ENCODE measurements at regions of chr4 and their contacts with region 1.

Region 1: GRCh38 chr4:52659001-52659721 is at the start of gene USP46:
- DNase-seq: peak; percentile 34 to 67
- ATAC-seq: peak; percentile 83 to 88 (median 84)
- H3K4me3 ChIP-seq: peak within 1 kb of the TSS; percentile 74
- H3K4me3 Mint-ChIP-seq: peak within 1 kb of the TSS; percentile 92
- H3K27ac ChIP-seq: peak within 1 kb of the TSS; percentile 46
- H3K27ac Mint-ChIP-seq: peak within 1 kb of the TSS; percentile 38 to 76
- H3K4me1 ChIP-seq: peaks cover 14% of the 10 kb centered on the region
- H3K4me1 Mint-ChIP-seq: peaks cover 20 to 36% of the 10 kb centered on the region in 2 donors
- H3K27me3 ChIP-seq: no peaks in the 10 kb centered on the region
- H3K27me3 Mint-ChIP-seq: no peaks in the 10 kb centered on the region
- CTCF ChIP-seq: no peak
- total RNA-seq, gene USP46: 7.8 to 11.7 (median 10.3) TPM

Region 2: DNA sequence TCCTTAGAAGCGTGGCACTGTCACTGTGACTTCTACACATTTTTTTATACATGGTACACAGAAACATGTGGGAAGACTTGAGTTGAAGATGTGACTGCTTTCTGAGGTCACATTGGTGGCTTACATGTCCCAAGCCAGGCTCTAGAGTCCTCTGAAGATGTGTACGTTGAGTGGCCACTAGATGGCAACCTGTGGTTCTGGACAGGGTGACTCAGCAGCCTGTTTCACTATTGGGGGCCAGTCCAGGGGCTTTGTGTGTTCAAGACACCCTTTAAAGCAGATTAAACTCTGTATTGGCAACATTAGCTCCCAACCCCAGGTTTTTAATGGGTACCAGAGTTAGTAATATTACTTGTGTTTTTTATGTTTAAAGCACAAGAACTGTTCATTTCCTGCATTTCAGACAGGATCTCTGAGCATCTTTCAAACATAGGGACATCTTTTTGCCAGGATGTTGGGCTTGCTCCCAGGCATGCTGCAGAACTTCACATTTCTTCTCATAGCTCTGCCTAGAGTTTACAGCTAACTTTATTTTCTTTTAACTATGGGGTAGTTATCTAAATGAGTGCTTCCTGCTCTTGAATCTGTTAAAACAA is 763.2 kb before region 1 on chr4:
- intact Hi-C with region 1: loop called (anchors 10 kb)
- DNase-seq: peak in 1 of 2 donors; percentile 70
- ATAC-seq: peak; percentile 89 to 99 (median 95)
- H3K4me3 ChIP-seq: no peak overlapping the region
- H3K4me3 Mint-ChIP-seq: no peak overlapping the region
- H3K27ac ChIP-seq: no peak overlapping the region
- H3K27ac Mint-ChIP-seq: peak overlapping the region in 1 of 2 donors; percentile 21
- H3K4me1 ChIP-seq: no peaks in the 10 kb centered on the region
- H3K4me1 Mint-ChIP-seq: peaks cover 0 to 8% of the 10 kb centered on the region in 2 donors
- H3K27me3 ChIP-seq: no peaks in the 10 kb centered on the region
- H3K27me3 Mint-ChIP-seq: no peaks in the 10 kb centered on the region
- CTCF ChIP-seq: peak; percentile 84

Region 3: GRCh38 chr4:52376132-52376704 is 282.9 kb before region 1 on chr4:
- intact Hi-C with region 1: loop called (anchors 10 kb)
- DNase-seq: peak in 1 of 2 donors; percentile 53
- ATAC-seq: no peak
- H3K4me3 ChIP-seq: no peak overlapping the region
- H3K4me3 Mint-ChIP-seq: no peak overlapping the region
- H3K27ac ChIP-seq: no peak overlapping the region
- H3K27ac Mint-ChIP-seq: no peak overlapping the region
- H3K4me1 ChIP-seq: no peaks in the 10 kb centered on the region
- H3K4me1 Mint-ChIP-seq: no peaks in the 10 kb centered on the region
- H3K27me3 ChIP-seq: no peaks in the 10 kb centered on the region
- H3K27me3 Mint-ChIP-seq: no peaks in the 10 kb centered on the region
- CTCF ChIP-seq: peak; percentile 63

Region 4: DNA sequence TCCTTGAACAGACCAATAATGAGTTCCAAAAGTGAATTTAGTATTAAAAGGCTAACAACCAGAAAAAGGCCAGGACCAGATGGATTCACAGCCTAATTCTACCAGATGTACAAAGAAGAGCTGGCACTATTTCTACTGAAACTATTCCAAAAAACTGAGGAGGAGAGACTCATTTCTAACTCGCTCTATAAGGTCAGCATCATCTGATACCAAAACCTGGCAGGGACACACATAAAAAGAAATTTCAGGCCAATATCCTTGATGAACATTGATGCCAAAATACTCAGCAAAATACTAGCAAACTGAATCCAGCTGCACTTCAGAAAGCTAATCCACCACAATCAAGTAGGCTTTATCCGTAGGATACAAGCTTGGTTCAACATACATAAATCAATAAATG is 35.8 kb after region 1 on chr4:
- intact Hi-C with region 1: no loop called
- DNase-seq: no peak
- ATAC-seq: no peak
- H3K4me3 ChIP-seq: no peak overlapping the region
- H3K4me3 Mint-ChIP-seq: no peak overlapping the region
- H3K27ac ChIP-seq: no peak overlapping the region
- H3K27ac Mint-ChIP-seq: no peak overlapping the region
- H3K4me1 ChIP-seq: no peaks in the 10 kb centered on the region
- H3K4me1 Mint-ChIP-seq: peaks cover 0 to 6% of the 10 kb centered on the region in 2 donors
- H3K27me3 ChIP-seq: peaks cover 2% of the 10 kb centered on the region
- H3K27me3 Mint-ChIP-seq: peaks cover 8 to 51% of the 10 kb centered on the region in 2 donors
- CTCF ChIP-seq: no peak

Region 5: DNA sequence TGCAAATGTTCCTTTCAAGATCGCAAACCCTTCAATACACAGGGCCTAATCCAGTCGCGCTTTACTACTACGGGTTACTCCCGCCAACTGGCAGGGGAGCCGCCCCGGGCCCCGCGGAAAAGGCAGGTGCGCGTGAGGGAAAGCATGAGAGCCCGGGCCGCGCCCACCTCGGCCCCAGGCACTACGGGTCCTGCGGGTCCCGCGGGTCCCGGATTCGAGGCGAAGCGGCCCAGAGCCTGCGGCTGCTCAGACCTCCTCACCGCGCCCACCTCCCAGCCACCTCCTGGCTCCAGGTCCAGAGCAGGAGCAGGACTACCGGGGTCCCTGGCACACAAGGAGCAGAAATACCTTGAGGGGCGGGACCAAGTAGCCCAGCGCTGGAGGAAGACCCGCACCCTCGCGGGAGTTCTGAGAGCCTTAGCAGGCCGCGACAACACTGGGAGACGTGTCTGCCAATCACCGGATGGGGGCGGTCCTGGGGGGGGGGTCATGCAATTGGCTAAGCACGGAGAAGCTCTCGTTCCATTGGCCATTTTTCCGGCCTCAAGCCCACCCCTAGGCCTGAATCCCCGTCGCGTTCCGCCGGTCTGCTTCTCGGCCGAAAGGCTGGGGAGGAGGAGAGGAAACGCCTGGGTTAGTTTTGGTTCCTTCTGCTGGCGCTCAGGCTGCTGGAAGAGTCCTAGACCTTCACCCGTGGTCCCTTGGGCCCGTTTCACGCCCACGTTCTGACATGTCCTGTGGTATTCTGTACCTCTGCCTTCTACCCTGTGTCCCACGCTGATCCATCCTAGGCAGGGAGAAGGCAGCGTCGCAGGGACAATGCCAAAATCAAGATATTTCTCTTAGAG is 63.0 kb after region 1 on chr4:
- intact Hi-C with region 1: loop called (anchors 5 kb)
- DNase-seq: peak; percentile 77 to 96
- ATAC-seq: peak; percentile 97 to 99 (median 98)
- H3K4me3 ChIP-seq: peak overlapping the region; percentile 70
- H3K4me3 Mint-ChIP-seq: peak overlapping the region; percentile 58
- H3K27ac ChIP-seq: peak overlapping the region; percentile 82
- H3K27ac Mint-ChIP-seq: peak overlapping the region; percentile 65 to 87
- H3K4me1 ChIP-seq: peaks cover 6% of the 10 kb centered on the region
- H3K4me1 Mint-ChIP-seq: peaks cover 12 to 14% of the 10 kb centered on the region in 2 donors
- H3K27me3 ChIP-seq: no peaks in the 10 kb centered on the region
- H3K27me3 Mint-ChIP-seq: peaks cover 2 to 7% of the 10 kb centered on the region in 2 donors
- CTCF ChIP-seq: no peak

Measured in natural killer cell (primary cell).